Activated CD4-positive, alpha-beta T cell treated with anti-CD3 and anti-CD28 coated beads for 36 hours (primary cell): ENCODE measurements at regions of chr2 and their contacts with region 1.

Region 1: GRCh38 chr2:213251618-213252017 is 32.6 kb upstream of the SPAG16 start:
- DNase-seq: no peak
- ATAC-seq: peak; percentile 72
- H3K4me3 Mint-ChIP-seq: no peak overlapping the region
- H3K27ac Mint-ChIP-seq: no peak overlapping the region
- H3K4me1 Mint-ChIP-seq: no peaks in the 10 kb centered on the region
- H3K27me3 Mint-ChIP-seq: no peaks in the 10 kb centered on the region

Region 2: GRCh38 chr2:212863185-212863588 is 388.4 kb before region 1 on chr2:
- CTCF ChIA-PET with region 1: no interaction called
- POLR2A ChIA-PET with region 1: no interaction called
- intact Hi-C with region 1: loop called (anchors 1 to 5 kb)
- DNase-seq: peak; percentile 63
- ATAC-seq: peak; percentile 60
- H3K4me3 Mint-ChIP-seq: no peak overlapping the region
- H3K27ac Mint-ChIP-seq: no peak overlapping the region
- H3K4me1 Mint-ChIP-seq: peaks cover 2% of the 10 kb centered on the region
- H3K27me3 Mint-ChIP-seq: no peaks in the 10 kb centered on the region

Region 3: DNA sequence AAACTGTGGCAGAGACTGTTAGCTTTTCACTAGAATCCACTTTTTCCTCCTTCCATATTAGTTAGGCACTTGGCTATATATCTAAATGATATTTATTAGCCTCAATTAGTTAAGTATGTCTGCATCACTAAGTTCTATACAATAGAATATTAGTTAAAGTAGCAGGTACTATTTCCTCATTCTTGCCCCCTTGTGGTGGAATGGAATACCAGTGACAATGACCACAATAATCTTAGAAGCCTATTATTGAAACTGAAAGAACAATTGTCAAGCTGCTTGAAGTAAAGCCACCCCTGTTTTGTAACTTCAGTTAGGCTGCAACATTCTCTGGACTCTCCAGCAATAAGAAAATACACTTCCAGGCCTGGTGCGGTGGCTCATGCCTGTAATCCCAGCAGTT is 682.9 kb after region 1 on chr2:
- CTCF ChIA-PET with region 1: no interaction called
- POLR2A ChIA-PET with region 1: no interaction called
- intact Hi-C with region 1: loop called (anchors 1 to 2 kb)
- DNase-seq: no peak
- ATAC-seq: peak; percentile 44
- H3K4me3 Mint-ChIP-seq: no peak overlapping the region
- H3K27ac Mint-ChIP-seq: no peak overlapping the region
- H3K4me1 Mint-ChIP-seq: no peaks in the 10 kb centered on the region
- H3K27me3 Mint-ChIP-seq: peaks cover 2% of the 10 kb centered on the region